ENCODE measurements at regions of chrX and their contacts with region 1.

Region 1: DNA sequence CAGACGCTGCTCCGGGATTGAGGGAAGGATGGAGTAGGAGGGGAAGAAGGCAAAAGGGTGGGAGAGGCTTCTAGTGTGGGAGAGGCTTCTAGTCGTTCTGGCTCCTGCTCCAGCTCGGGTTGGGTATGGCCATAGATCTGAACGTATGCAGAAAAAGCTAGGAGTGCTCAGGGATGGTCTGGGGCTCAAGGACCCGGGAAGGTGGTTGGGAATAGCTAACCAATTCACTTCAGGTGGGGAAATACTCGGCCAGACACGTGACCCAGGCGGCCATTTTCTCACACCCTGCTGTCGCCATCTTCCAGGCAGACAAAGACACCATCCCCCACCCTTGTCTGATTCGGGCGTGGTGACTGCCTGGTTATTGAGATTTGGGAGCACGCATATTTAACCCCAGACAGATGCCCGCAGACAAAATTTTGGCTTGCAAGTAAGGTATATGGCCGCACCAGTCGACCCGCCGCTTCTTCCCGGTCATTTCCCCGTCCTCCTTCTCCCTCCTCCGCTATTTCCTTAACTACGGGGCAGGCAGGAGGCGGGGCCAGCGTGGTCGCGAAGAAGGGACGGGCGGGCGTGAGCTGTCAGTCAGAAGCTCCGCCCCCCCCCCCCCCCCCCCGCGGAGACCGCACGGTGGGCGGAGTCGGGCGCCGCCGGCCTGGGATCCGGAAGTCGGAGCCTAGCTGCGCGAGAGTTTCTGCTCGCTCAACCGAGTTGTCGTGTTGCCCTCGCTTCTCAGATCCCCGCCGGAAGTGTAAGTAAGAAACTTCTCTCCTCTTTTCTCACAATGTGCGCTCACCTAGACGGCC is at the start of gene GNL3L:
- DNase-seq: peak; percentile 86 to 94 (median 88)
- ATAC-seq: peak; percentile 93 to 98 (median 95)
- H3K4me3 ChIP-seq: peak within 1 kb of the TSS; percentile 44 to 65 (median 48)
- H3K27ac ChIP-seq: peak within 1 kb of the TSS; percentile 53 to 83 (median 67)
- H3K4me1 ChIP-seq: peaks cover 0 to 8% (median 0%) of the 10 kb centered on the region in 3 donors
- H3K27me3 ChIP-seq: peaks cover 0 to 4% (median 0%) of the 10 kb centered on the region in 4 donors
- CTCF ChIP-seq: no peak
- total RNA-seq, gene GNL3L: 10.6 to 21.6 (median 16.3) TPM

Region 2: GRCh38 chrX:54045563-54046228 is 484.1 kb before region 1 on chrX:
- intact Hi-C with region 1: no loop called
- DNase-seq: no peak
- ATAC-seq: no peak
- H3K4me3 ChIP-seq: no peak overlapping the region
- H3K27ac ChIP-seq: peak overlapping the region in 3 of 4 donors; percentile 80 to 95 (median 88)
- H3K4me1 ChIP-seq: no peaks in the 10 kb centered on the region
- H3K27me3 ChIP-seq: no peaks in the 10 kb centered on the region
- CTCF ChIP-seq: no peak

Region 3: GRCh38 chrX:54479136-54480111 is 50.3 kb before region 1 on chrX:
- intact Hi-C with region 1: loop called in 1 of 3 experiments (anchors 10 kb)
- DNase-seq: no peak
- ATAC-seq: peak in 3 of 4 donors; percentile 24 to 46 (median 41)
- H3K4me3 ChIP-seq: no peak overlapping the region
- H3K27ac ChIP-seq: no peak overlapping the region
- H3K4me1 ChIP-seq: no peaks in the 10 kb centered on the region
- H3K27me3 ChIP-seq: no peaks in the 10 kb centered on the region
- CTCF ChIP-seq: no peak